ENCODE measurements at regions of chr16 and their contacts with region 1.

Region 1: DNA sequence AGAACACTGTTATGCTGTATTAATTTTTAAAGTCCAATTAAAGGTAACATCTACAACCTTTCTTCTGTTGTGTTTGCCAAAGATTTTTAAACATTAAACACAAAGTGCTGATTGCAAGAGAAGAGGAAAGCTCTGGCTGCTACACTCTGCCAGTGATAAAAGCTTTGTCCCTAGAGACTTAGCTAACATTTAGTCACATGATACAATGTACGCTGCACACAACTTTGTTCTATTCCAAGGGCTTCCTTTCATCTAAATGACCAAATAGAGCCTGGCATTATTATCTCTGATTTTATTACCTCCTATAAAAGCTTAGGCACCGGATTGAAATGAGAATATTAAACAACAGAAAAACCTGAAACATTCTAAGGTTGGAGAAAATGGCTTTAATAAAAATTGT is 388.7 kb upstream of the PMFBP1 start:
- DNase-seq: no peak
- ATAC-seq: no peak
- H3K4me3 ChIP-seq: no peak overlapping the region
- H3K27ac ChIP-seq: no peak overlapping the region
- H3K4me1 ChIP-seq: no peaks in the 10 kb centered on the region
- H3K27me3 ChIP-seq: no peaks in the 10 kb centered on the region

Region 2: DNA sequence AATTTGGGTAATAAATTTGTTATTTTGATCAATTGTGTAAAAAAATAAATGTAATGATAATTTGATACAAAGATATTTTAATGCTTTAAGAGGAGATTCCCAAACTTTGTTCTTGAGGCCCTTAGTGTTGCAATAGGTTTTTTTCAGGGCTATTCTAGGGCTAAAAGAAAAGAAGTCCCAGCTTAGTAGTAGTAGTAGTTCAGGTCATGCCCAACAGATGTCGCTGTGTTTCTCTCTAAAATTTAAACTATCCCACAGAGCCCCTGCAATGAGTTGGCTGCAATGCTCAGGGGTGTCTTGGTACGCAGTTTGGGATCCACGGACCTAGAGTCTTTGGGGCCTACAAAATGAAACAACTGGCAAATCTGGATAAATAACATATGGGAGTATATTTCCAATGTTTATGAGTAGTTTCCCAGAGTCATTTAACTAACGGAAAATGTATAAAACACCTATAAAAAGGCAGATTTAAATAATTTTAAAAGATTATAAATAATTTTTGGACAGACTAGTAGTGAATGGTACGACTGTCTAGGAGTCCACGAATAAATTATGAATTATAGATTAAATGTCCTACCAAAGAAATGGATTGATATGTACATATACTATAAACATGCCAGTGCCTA is 160.2 kb before region 1 on chr16:
- intact Hi-C with region 1: no loop called
- DNase-seq: no peak
- ATAC-seq: peak; percentile 47 to 60
- H3K4me3 ChIP-seq: no peak overlapping the region
- H3K27ac ChIP-seq: no peak overlapping the region
- H3K4me1 ChIP-seq: no peaks in the 10 kb centered on the region
- H3K27me3 ChIP-seq: no peaks in the 10 kb centered on the region

Region 3: DNA sequence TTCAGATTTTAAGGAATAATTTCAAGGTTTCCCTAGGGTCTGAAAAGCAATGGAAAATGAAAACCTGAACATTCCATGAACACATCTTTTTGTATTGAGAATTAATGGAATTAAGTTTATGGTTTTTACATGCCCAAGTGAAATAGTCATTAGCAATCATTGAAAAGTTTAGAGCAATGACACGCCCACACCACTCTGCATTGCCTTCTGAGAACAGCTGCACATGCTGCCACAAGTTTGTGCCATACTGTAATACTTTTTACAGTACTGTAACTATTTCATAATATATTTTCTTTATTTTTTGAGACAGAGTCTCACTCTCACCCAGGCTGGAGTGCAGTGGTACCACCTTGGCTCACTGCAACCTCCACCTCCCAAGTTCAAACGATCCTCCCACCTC is 43.5 kb before region 1 on chr16:
- intact Hi-C with region 1: loop called in 1 of 4 experiments (anchors 10 kb)
- DNase-seq: no peak
- ATAC-seq: no peak
- H3K4me3 ChIP-seq: no peak overlapping the region
- H3K27ac ChIP-seq: no peak overlapping the region
- H3K4me1 ChIP-seq: no peaks in the 10 kb centered on the region
- H3K27me3 ChIP-seq: no peaks in the 10 kb centered on the region